Posterior vena cava (tissue), 2 donors: ENCODE measurements at regions of chr13 and their contacts with region 1.

Region 1: DNA sequence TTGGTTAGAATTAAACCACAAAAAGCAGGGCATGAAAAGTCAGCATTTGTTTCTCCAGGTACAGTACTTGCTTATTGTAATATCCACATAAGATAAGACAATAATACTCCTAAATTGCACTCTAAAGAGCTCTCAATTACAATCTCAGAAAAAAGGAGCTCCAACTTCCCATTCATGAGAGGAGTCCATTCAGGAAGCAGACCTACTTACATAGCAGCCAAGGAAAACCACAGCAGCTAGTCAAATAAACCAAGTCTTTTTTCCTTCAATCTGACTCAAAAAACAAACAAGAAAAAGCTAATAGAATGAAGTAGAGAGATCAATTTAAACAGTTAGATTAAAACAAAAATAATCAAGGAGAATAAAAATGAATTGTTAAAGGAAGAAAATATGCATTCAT is 885.2 kb upstream of the SLITRK6 start:
- DNase-seq: no peak

Region 2: GRCh38 chr13:86633346-86633745 is 51.1 kb before region 1 on chr13:
- intact Hi-C with region 1: no loop called
- DNase-seq: no peak

Region 3: DNA sequence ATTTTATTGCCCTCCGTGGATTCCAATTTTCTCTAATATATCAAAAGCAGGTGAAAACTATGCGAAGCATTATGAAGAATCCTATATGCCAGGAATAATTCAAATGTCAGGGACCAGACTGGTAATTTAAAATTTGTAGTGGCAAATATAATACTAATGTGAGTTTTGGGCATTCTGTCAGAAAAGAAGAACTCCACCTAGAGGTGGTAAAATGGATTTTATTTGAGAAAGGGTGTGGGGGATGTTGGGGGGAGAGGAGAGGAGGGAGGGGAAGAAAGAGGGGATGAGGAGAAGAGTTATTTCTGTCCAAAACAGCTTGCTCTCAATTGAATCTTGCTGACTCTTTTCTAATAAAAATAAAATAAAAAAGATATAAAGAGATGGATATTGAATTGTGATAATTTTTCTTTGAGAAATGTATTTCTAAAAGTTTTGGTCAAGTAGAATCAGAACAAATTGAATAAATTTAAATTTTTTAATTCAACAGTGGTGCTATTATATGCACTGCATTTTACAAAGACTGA is 57.4 kb after region 1 on chr13:
- intact Hi-C with region 1: loop called in 1 of 2 experiments (anchors 2 kb)
- DNase-seq: no peak